ENCODE measurements at regions of chr20 and their contacts with region 1.

Region 1: GRCh38 chr20:37042986-37043972 is 52.5 kb downstream of the RBL1 start:
- DNase-seq: peak; percentile 85
- H3K4me3 Mint-ChIP-seq: peak overlapping the region; percentile 82
- H3K27ac Mint-ChIP-seq: peak overlapping the region; percentile 94
- H3K4me1 Mint-ChIP-seq: peaks cover 35% of the 10 kb centered on the region
- H3K27me3 Mint-ChIP-seq: no peaks in the 10 kb centered on the region

Region 2: GRCh38 chr20:36951198-36951976 is 91.9 kb before region 1 on chr20 and contains the start of gene SAMHD1:
- intact Hi-C with region 1: loop called (anchors 2 kb)
- DNase-seq: peak; percentile 97
- H3K4me3 Mint-ChIP-seq: peak within 1 kb of the TSS; percentile 98
- H3K27ac Mint-ChIP-seq: peak within 1 kb of the TSS; percentile 96
- H3K4me1 Mint-ChIP-seq: peaks cover 43% of the 10 kb centered on the region
- H3K27me3 Mint-ChIP-seq: no peaks in the 10 kb centered on the region
- total RNA-seq, gene SAMHD1: 51.6 TPM in 2 replicates

Region 3: GRCh38 chr20:37081717-37082289 is 38.5 kb after region 1 on chr20:
- intact Hi-C with region 1: loop called (anchors 5 kb)
- DNase-seq: peak; percentile 80
- H3K4me3 Mint-ChIP-seq: no peak overlapping the region
- H3K27ac Mint-ChIP-seq: peak overlapping the region; percentile 49
- H3K4me1 Mint-ChIP-seq: peaks cover 32% of the 10 kb centered on the region
- H3K27me3 Mint-ChIP-seq: no peaks in the 10 kb centered on the region

Region 4: GRCh38 chr20:37463726-37464494 is 420.6 kb after region 1 on chr20:
- intact Hi-C with region 1: no loop called
- DNase-seq: no peak
- H3K4me3 Mint-ChIP-seq: no peak overlapping the region
- H3K27ac Mint-ChIP-seq: no peak overlapping the region
- H3K4me1 Mint-ChIP-seq: no peaks in the 10 kb centered on the region
- H3K27me3 Mint-ChIP-seq: peaks cover 16% of the 10 kb centered on the region

Measured in activated CD4-positive, alpha-beta T cell treated with anti-CD3 and anti-CD28 coated beads, Interleukin-2, amount 10 ng/mL, durations not matched to agents 24 days and 14 days (primary cell).